ENCODE measurements at regions of chr14 and their contacts with region 1.

Region 1: DNA sequence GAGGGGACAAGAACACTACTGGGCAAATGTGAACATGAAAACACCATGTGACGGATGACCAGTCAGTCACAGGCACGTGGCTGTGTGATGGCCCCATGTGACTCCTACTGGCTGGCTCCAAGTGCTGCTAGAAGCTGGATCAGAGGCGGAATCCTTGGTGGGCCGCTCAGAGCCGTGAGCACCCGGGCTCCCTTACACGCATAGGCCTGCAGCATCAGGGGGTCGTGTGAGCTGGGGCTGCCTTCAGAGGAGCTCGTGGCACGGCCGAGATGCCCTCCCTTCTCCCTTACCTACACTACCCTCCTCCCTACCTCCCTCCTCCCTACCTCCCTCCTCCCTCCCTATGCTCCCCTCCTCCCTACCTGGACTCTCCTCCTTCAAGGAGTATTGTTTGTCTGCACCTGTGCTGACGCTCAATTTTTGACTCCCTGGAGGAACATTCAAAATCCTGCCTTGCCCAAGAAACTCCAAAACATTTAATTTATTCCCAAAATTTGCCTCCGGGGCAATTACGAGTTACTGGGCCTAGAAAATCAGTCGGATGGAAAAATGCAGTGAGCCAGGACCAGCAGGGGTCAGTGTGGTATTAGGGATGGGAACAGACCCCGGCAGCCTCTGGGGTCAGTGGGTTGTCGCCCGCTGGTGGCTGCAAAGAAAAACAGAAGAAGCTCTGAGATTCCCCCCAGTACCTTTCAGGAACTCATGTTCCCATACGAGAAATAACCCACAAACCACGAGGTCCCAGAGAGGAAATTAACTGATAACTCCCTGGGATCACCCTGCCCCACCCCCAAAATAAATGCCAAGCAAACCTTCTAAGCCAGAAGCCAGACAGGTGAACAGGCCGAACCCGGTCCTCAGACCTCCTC is 61.2 kb downstream of the C14orf132 start:
- DNase-seq: peak; percentile 81
- H3K4me3 ChIP-seq: peak overlapping the region in 1 of 2 experiments; percentile 45; a peak in 1 of 4 replicates
- H3K27ac ChIP-seq: no peak overlapping the region
- H3K4me1 ChIP-seq: peaks cover 10 to 52% of the 10 kb centered on the region in 2 experiments; a peak in 2 of 4 replicates
- H3K27me3 ChIP-seq: no peaks in the 10 kb centered on the region
- CTCF ChIP-seq: peak; percentile 99
- EP300 ChIP-seq: no peak
- RAD21 ChIP-seq: peak; percentile 100

Region 2: DNA sequence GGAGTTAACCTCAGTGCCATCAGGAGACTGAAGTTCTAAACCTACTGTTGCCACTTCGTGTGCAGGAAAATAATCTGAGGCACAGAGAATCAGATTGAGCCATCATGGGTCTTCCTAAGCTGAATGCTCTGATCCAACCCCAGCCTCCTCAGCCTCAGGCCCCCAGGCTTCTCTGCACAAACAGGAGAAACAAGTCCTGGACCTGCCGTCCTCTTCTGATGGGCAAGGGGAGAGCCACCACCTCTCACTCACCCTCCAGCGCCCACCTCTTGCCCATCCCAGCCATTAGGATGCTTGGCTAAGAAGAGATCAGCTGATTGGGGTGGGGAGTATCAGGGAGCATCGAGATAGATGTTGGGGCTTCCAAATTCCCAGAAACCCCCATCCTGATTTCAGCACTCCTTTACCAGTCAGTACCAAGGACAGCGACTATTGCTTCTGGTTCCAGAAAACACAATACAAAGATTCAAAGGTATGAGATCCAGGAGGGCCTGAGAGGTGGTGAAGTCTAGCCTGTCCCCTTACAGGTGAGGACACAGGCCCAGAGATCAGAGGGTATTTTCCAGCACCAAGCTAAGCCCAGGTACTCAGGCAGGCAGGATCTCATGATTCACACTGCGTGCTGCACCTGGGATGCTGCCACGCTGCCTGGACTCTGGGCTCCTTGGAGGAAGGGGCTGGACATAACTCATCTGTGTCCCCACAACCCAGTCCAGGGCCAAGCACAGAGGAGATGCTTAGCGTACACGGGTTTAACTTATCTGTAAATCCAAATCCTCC is 147.3 kb before region 1 on chr14:
- CTCF ChIA-PET with region 1: no interaction called
- POLR2A ChIA-PET with region 1: no interaction called
- DNase-seq: no peak
- H3K4me3 ChIP-seq: no peak overlapping the region
- H3K27ac ChIP-seq: no peak overlapping the region
- H3K4me1 ChIP-seq: no peaks in the 10 kb centered on the region; a peak in 1 of 4 replicates
- H3K27me3 ChIP-seq: no peaks in the 10 kb centered on the region
- CTCF ChIP-seq: no peak
- EP300 ChIP-seq: no peak
- RAD21 ChIP-seq: no peak

Region 3: DNA sequence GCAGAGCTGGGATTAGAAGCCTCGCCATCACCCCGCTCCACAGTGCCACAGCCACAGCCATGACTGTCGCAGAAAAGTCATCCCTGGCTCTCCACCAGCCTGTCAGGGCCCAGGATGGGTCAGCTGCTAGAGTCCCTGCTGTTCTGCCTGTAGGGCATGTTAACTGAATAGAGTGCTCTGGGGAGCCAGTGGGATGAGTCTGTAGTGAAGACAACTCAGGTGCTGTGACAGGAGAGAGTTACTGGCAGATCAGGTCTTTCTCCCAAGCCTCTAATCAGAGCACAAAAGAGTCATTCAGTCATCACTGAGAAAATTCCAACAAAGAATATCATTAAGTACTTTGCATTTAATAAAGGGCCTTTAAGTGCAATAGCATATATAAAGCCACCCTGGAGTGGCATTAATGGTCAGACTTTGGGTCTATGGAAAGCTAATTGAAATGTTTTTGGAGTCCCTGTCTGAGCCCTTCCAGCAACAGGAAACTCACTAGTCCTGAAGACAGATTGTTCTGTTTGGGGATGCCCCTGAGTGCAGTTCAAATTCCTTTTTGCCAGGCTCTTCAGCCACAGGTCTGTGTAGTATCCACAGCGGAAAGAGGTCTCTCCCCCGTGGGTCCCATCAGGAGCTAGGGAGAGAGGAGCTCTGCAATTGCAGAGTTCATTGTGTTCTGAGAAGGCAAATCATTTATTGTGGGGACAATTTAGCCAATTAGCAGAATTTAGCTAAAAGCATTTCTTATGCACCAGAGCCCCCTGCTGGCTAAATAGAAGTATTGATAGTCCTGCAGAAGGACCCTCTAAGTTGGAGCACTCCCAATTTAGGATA is 106.4 kb before region 1 on chr14:
- CTCF ChIA-PET with region 1: interaction called, 503 read pairs
- POLR2A ChIA-PET with region 1: interaction called, 6 read pairs
- DNase-seq: peak; percentile 47
- H3K4me3 ChIP-seq: peak overlapping the region in 1 of 2 experiments; percentile 36; a peak in 1 of 4 replicates
- H3K27ac ChIP-seq: no peak overlapping the region
- H3K4me1 ChIP-seq: no peaks in the 10 kb centered on the region
- H3K27me3 ChIP-seq: no peaks in the 10 kb centered on the region
- CTCF ChIP-seq: peak; percentile 93
- EP300 ChIP-seq: no peak
- RAD21 ChIP-seq: peak; percentile 95

Region 4: GRCh38 chr14:96065664-96066459 is 34.5 kb before region 1 on chr14:
- CTCF ChIA-PET with region 1: interaction called, 94 read pairs
- POLR2A ChIA-PET with region 1: interaction called, 4 read pairs
- DNase-seq: peak; percentile 78
- H3K4me3 ChIP-seq: no peak overlapping the region
- H3K27ac ChIP-seq: peak overlapping the region in 1 of 2 experiments; percentile 66; a peak in 2 of 4 replicates
- H3K4me1 ChIP-seq: peaks cover 0 to 29% of the 10 kb centered on the region in 2 experiments; a peak in 2 of 4 replicates
- H3K27me3 ChIP-seq: no peaks in the 10 kb centered on the region
- CTCF ChIP-seq: no peak
- EP300 ChIP-seq: peak in 1 of 2 experiments; percentile 85; a peak in 2 of 4 replicates
- RAD21 ChIP-seq: no peak; the same call in 1 of the 2 replicates

Region 5: DNA sequence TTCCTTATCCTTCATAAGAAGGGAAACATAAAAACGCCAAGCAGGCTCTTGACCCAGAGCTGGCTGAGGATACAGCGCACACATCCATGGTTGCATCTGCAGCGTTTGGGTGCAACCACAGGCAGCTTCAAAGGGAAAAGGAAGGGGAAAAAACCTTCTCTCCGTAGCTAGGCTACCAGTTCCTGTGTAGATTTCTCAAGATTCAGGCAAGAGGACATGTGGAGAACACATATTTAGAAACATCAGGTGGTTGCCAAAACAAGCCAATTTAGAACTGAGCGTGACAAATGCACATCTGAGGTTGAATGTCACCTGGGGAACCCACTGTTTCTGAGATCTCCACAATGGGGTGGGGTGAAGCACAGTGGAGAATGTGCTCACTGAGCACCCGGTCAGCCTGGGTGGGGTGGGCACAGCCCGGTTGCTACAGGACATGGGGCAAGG is 26.0 kb after region 1 on chr14:
- CTCF ChIA-PET with region 1: interaction called, 24 read pairs
- POLR2A ChIA-PET with region 1: no interaction called
- DNase-seq: no peak
- H3K4me3 ChIP-seq: no peak overlapping the region
- H3K27ac ChIP-seq: no peak overlapping the region
- H3K4me1 ChIP-seq: peaks cover 0 to 12% of the 10 kb centered on the region in 2 experiments; a peak in 1 of 4 replicates
- H3K27me3 ChIP-seq: no peaks in the 10 kb centered on the region
- CTCF ChIP-seq: no peak
- EP300 ChIP-seq: no peak
- RAD21 ChIP-seq: no peak

Region 6: GRCh38 chr14:96138241-96138640 is 37.8 kb after region 1 on chr14:
- CTCF ChIA-PET with region 1: no interaction called
- POLR2A ChIA-PET with region 1: no interaction called
- DNase-seq: no peak
- H3K4me3 ChIP-seq: no peak overlapping the region
- H3K27ac ChIP-seq: no peak overlapping the region
- H3K4me1 ChIP-seq: no peaks in the 10 kb centered on the region; a peak in 1 of 4 replicates
- H3K27me3 ChIP-seq: no peaks in the 10 kb centered on the region
- CTCF ChIP-seq: no peak
- EP300 ChIP-seq: no peak
- RAD21 ChIP-seq: no peak

Region 7: GRCh38 chr14:96204151-96205058 is 104.0 kb after region 1 on chr14 and contains the start of gene BDKRB2:
- CTCF ChIA-PET with region 1: interaction called, 24 read pairs
- POLR2A ChIA-PET with region 1: interaction called, 3 read pairs
- DNase-seq: peak; percentile 91
- H3K4me3 ChIP-seq: peak within 1 kb of the TSS; percentile 48 to 64
- H3K27ac ChIP-seq: peak within 1 kb of the TSS in 1 of 2 experiments; percentile 39; a peak in 3 of 4 replicates
- H3K4me1 ChIP-seq: peaks cover 11 to 22% of the 10 kb centered on the region in 2 experiments; a peak in 2 of 4 replicates
- H3K27me3 ChIP-seq: no peaks in the 10 kb centered on the region
- CTCF ChIP-seq: no peak
- EP300 ChIP-seq: peak; percentile 53 to 54; a peak in 2 of 4 replicates
- RAD21 ChIP-seq: peak; percentile 33
- polyA plus RNA-seq, gene BDKRB2: 4.8 and 6.4 TPM in 2 replicates

Region 8: DNA sequence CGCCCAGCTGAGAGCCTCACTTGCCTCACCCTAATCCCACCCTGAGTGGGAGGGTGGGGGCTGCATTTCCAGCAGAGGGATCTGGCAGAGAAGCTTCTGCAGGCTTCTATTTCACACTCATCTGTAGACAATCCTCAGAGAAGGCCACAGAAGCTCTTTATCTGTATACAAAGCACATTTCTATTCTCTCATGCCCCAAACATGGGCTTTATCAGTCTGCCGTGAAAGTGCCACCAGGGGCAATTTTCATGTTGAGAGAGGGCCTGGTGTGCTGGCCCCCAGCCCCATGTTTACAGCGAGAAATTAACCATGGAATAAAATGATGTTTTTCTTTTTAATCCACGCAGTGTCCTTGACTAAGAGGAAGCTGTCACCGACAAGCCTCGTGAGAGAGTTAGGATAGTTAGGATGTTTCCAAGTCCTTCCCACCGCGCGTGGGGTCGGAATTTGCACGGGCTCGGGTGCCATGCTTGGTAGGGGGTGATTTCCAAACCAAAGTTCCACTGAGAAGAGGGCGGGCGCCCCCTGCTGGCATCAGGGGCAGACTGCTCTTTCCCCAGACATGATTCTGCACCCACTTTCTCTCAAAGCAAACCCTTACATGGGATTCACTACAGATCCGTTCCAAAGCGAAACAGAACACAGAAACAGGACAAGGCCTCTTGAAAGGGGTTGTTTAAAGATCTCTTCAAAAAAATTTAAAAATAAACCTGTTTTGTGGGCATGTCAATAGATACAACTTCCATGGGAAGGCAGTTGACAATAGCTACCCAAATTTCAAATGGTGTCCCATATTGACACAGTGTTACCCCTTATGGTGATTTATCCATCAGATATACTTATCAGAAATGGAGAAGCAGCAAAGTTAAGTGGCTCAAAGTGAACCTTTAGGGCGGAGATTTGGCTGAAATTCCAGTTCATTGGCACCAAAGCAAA is 175.1 kb after region 1 on chr14:
- CTCF ChIA-PET with region 1: interaction called, 920 read pairs
- POLR2A ChIA-PET with region 1: interaction called, 8 read pairs
- DNase-seq: peak; percentile 78
- H3K4me3 ChIP-seq: peak overlapping the region in 1 of 2 experiments; percentile 14; a peak in 1 of 4 replicates
- H3K27ac ChIP-seq: peak overlapping the region; percentile 67 to 68
- H3K4me1 ChIP-seq: peaks cover 18 to 30% of the 10 kb centered on the region in 2 experiments
- H3K27me3 ChIP-seq: no peaks in the 10 kb centered on the region
- CTCF ChIP-seq: peak; percentile 98
- EP300 ChIP-seq: no peak
- RAD21 ChIP-seq: peak; percentile 96

Region 9: GRCh38 chr14:96411555-96411954 is 311.2 kb after region 1 on chr14:
- CTCF ChIA-PET with region 1: interaction called, 16 read pairs
- POLR2A ChIA-PET with region 1: no interaction called
- DNase-seq: no peak
- H3K4me3 ChIP-seq: no peak overlapping the region
- H3K27ac ChIP-seq: no peak overlapping the region
- H3K4me1 ChIP-seq: no peaks in the 10 kb centered on the region
- H3K27me3 ChIP-seq: no peaks in the 10 kb centered on the region
- CTCF ChIP-seq: no peak
- EP300 ChIP-seq: no peak
- RAD21 ChIP-seq: no peak

Measured in SK-N-SH (cell line).